ENCODE measurements at regions of chr7 and their contacts with region 1.

Region 1: GRCh38 chr7:113094517-113095249 is 8.1 kb upstream of the GPR85 start:
- DNase-seq: no peak
- ATAC-seq: no peak
- H3K4me3 ChIP-seq: no peak overlapping the region
- H3K4me3 Mint-ChIP-seq: no peak overlapping the region
- H3K27ac ChIP-seq: no peak overlapping the region
- H3K27ac Mint-ChIP-seq: no peak overlapping the region
- H3K4me1 ChIP-seq: no peaks in the 10 kb centered on the region
- H3K4me1 Mint-ChIP-seq: no peaks in the 10 kb centered on the region
- H3K27me3 ChIP-seq: no peaks in the 10 kb centered on the region
- H3K27me3 Mint-ChIP-seq: peaks cover 40% of the 10 kb centered on the region
- CTCF ChIP-seq: no peak

Region 2: DNA sequence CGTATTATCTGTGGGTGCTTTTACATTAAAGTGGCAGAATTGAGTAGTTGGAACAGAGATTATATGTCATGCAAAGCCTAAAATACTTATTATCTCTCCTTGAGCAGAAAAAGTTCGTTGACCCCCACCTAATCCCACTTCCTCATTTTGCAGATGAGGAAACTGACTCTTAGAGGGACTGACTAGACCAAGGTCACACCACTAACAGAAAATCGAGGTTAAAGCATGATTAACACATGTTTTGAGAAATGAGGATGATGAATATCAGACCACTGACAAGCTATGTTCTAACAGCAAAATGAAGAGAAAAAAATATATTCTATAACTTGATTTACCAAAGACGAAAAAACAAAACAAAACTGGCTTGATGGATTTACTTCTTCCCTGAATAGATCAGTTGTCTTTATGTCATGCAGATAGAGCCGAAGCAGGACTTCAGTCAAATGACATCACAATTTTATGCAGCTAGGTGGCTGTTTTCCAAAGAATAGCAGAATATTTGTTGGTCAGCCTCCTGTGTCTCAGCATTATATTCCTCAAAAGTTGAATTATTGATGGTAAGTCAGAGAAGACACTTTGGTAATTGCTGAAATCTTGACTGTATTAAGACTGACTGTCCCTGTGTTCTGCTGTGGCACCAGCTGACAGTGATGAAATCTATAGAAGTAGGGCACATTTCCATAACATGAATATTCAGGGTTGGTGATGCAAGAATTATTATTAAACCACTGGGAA is 47.9 kb after region 1 on chr7:
- CTCF ChIA-PET with region 1: no interaction called
- POLR2A ChIA-PET with region 1: no interaction called
- intact Hi-C with region 1: loop called in 1 of 2 experiments (anchors 5 kb)
- DNase-seq: no peak
- ATAC-seq: no peak
- H3K4me3 ChIP-seq: no peak overlapping the region
- H3K4me3 Mint-ChIP-seq: no peak overlapping the region
- H3K27ac ChIP-seq: no peak overlapping the region
- H3K27ac Mint-ChIP-seq: no peak overlapping the region
- H3K4me1 ChIP-seq: no peaks in the 10 kb centered on the region
- H3K4me1 Mint-ChIP-seq: no peaks in the 10 kb centered on the region
- H3K27me3 ChIP-seq: peaks cover 0 to 3% of the 10 kb centered on the region in 2 experiments
- H3K27me3 Mint-ChIP-seq: peaks cover 16% of the 10 kb centered on the region
- CTCF ChIP-seq: no peak

Region 3: GRCh38 chr7:113154117-113154516 is 59.4 kb after region 1 on chr7:
- CTCF ChIA-PET with region 1: no interaction called
- POLR2A ChIA-PET with region 1: no interaction called
- intact Hi-C with region 1: no loop called
- DNase-seq: no peak
- ATAC-seq: no peak
- H3K4me3 ChIP-seq: no peak overlapping the region
- H3K4me3 Mint-ChIP-seq: no peak overlapping the region
- H3K27ac ChIP-seq: no peak overlapping the region
- H3K27ac Mint-ChIP-seq: no peak overlapping the region
- H3K4me1 ChIP-seq: no peaks in the 10 kb centered on the region
- H3K4me1 Mint-ChIP-seq: no peaks in the 10 kb centered on the region
- H3K27me3 ChIP-seq: peaks cover 0 to 14% of the 10 kb centered on the region in 2 experiments
- H3K27me3 Mint-ChIP-seq: peaks cover 42% of the 10 kb centered on the region
- CTCF ChIP-seq: no peak

Measured in CD4-positive, alpha-beta T cell (primary cell).